ENCODE measurements at regions of chr4 and their contacts with region 1.

Region 1: DNA sequence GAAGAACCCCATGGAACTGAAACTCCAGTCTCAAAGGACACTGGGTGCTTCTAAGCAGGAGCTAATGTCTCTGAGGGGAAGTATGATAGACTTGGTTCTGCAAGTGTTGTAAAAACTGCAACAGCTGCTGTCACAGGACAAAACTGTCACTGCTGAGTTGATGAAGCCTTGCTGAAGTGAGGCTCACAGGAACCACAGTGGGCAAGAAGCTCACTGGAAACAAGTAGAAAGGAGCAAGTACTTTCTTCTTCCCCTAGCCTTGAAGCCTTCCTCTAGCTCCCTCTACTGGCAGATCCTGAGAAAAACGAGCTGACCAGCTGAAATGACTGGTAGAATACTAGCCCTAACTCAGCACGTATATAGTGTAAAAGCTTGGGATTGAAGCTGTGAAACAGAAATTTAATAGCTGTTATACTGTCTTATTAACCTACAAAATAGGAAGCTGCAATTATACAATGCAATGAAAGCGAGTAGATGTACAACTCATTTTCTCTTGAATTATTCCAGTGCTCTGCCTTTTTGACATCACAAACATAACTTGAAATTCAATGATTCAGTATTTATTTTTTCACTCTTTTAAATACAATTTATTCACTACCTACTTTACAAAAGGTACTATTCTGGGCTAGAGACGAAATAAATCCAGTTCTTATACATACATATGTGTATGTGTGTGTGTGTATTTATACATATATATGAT is 91.4 kb downstream of the GABRB1 start:
- DNase-seq: peak; percentile 68
- H3K4me3 ChIP-seq: no peak overlapping the region
- H3K27ac ChIP-seq: no peak overlapping the region
- H3K27me3 ChIP-seq: no peaks in the 10 kb centered on the region
- CTCF ChIP-seq: peak; percentile 95

Region 2: DNA sequence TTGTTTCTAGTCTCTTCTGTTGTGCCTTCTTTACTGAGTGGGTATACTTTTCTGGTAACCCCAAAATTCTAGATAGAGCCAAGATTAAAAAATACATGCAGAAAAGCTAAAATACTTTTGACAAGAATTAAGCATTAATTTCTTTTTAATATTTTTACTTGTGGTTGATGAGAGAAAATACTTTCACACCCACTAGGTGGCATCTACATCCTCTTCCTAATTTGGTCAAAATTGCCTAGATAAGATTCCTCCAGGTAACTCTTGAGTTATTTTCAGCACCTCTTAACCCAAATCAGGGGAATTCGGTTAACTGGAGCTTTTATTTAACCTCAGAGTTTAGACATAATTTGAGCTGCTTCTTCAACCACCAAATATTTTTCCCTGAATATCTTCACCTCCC is 185.2 kb before region 1 on chr4:
- CTCF ChIA-PET with region 1: interaction called, 52 read pairs
- POLR2A ChIA-PET with region 1: no interaction called
- DNase-seq: no peak
- H3K4me3 ChIP-seq: no peak overlapping the region
- H3K27ac ChIP-seq: no peak overlapping the region
- H3K27me3 ChIP-seq: no peaks in the 10 kb centered on the region
- CTCF ChIP-seq: peak; percentile 43

Region 3: DNA sequence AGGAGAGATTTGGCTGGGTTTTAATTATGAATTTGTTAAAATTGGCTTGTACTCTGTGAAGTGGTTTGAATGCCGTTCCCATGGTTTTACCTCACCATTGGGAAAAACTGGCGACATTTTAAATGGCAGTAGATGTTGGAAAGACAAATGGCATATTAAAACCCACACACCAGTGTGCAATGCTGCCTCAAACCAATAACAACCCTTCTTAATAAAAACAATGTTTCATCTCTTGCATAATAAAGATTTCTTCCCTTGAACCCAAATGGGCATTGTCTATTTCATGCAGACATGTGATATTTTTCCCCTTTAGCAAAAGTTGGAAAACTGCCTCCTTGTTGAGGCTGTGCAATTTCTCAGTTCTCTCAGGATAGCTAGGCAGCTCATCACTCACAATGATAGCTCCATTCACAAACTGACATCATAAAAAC is 57.7 kb before region 1 on chr4:
- CTCF ChIA-PET with region 1: interaction called, 17 read pairs
- POLR2A ChIA-PET with region 1: no interaction called
- DNase-seq: no peak
- H3K4me3 ChIP-seq: no peak overlapping the region
- H3K27ac ChIP-seq: no peak overlapping the region
- H3K27me3 ChIP-seq: no peaks in the 10 kb centered on the region
- CTCF ChIP-seq: no peak

Region 4: DNA sequence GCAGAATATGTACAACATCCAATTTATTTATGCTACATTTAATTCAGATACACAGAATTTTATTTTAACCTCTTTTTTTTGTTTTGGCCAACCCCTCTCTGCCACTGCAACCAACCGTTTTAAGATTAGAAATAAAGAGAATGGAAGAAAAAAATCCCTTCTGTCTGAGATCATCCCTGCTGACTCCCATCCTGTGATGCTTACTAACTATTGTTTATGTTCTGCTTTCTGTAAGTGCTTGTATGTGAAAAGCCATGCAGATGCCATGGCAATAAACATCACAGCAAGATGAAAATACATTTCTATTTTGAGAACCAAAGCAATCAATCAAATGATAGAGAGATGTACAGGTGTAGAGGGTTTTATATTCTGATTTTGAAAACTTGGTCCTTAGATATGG is 21.3 kb before region 1 on chr4:
- CTCF ChIA-PET with region 1: interaction called, 72 read pairs
- POLR2A ChIA-PET with region 1: interaction called, 3 read pairs
- DNase-seq: no peak
- H3K4me3 ChIP-seq: no peak overlapping the region
- H3K27ac ChIP-seq: no peak overlapping the region
- H3K27me3 ChIP-seq: no peaks in the 10 kb centered on the region
- CTCF ChIP-seq: no peak

Region 5: GRCh38 chr4:47145630-47146029 is 22.9 kb after region 1 on chr4:
- CTCF ChIA-PET with region 1: interaction called, 29 read pairs
- POLR2A ChIA-PET with region 1: no interaction called
- DNase-seq: peak; percentile 67
- H3K4me3 ChIP-seq: no peak overlapping the region
- H3K27ac ChIP-seq: no peak overlapping the region
- H3K27me3 ChIP-seq: no peaks in the 10 kb centered on the region
- CTCF ChIP-seq: no peak